A673 (cell line): ENCODE measurements at regions of chr11 and their contacts with region 1.

Region 1: GRCh38 chr11:75562048-75562835 is at the start of gene SERPINH1:
- DNase-seq: peak; percentile 93
- H3K4me3 ChIP-seq: peak within 1 kb of the TSS; percentile 86
- H3K27ac ChIP-seq: peak within 1 kb of the TSS; percentile 99
- H3K4me1 ChIP-seq: peaks cover 66% of the 10 kb centered on the region
- H3K27me3 ChIP-seq: no peaks in the 10 kb centered on the region
- CTCF ChIP-seq: no peak
- total RNA-seq, gene SERPINH1: 264 and 268 TPM in 2 replicates

Region 2: GRCh38 chr11:75689863-75690609 is 127.8 kb after region 1 on chr11:
- CTCF ChIA-PET with region 1: no interaction called
- POLR2A ChIA-PET with region 1: no interaction called
- intact Hi-C with region 1: no loop called
- DNase-seq: no peak
- H3K4me3 ChIP-seq: no peak overlapping the region
- H3K27ac ChIP-seq: no peak overlapping the region
- H3K4me1 ChIP-seq: no peaks in the 10 kb centered on the region
- H3K27me3 ChIP-seq: peaks cover 3% of the 10 kb centered on the region
- CTCF ChIP-seq: no peak

Region 3: DNA sequence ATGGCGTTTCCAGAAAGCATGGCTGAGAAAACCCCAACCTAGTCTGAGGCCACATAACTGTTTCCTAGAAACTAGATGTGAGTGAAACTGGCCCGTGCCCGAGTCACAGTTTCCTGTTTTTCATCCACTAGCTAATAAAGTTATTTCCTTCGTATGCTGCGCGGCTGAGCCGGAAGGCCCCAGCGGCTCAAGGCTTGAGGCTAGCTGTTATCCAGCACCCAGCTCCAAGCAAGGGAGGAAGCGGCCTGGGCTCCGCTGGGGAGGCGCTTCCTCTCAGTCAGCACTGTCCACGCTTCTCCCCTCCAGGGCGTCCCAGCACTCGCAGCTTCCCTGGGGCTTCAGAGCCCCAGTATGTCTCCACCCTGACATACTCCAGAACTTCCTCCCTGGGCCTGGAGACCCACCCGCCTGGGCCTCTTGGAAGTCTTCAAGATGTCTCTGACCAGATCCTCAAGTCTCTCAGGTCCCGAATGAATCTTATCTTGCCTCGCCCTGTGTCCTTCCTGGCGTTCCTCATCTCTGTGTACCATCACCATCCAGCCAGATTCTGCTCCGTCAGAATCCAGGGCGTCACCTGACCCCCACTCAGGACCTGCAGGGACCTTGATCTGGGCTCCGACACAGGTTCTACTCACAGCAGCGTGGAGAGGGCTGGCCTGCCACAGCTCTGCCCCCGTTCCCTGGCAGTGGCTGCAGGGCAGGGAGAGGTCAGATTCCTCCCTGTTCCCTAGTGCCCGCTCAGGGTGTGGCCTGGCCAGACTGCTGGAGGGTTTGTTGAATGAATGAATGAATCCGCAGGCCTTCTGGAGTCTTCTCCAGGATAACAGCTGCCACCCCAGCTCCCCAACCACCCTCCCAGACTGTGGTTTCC is 1026.4 kb after region 1 on chr11:
- CTCF ChIA-PET with region 1: no interaction called
- POLR2A ChIA-PET with region 1: interaction called, 19 read pairs
- intact Hi-C with region 1: no loop called
- DNase-seq: no peak
- H3K4me3 ChIP-seq: no peak overlapping the region
- H3K27ac ChIP-seq: no peak overlapping the region
- H3K4me1 ChIP-seq: no peaks in the 10 kb centered on the region
- H3K27me3 ChIP-seq: no peaks in the 10 kb centered on the region
- CTCF ChIP-seq: no peak